Vagina (tissue), 2 donors: ENCODE measurements at regions of chr16 and their contacts with region 1.

Region 1: DNA sequence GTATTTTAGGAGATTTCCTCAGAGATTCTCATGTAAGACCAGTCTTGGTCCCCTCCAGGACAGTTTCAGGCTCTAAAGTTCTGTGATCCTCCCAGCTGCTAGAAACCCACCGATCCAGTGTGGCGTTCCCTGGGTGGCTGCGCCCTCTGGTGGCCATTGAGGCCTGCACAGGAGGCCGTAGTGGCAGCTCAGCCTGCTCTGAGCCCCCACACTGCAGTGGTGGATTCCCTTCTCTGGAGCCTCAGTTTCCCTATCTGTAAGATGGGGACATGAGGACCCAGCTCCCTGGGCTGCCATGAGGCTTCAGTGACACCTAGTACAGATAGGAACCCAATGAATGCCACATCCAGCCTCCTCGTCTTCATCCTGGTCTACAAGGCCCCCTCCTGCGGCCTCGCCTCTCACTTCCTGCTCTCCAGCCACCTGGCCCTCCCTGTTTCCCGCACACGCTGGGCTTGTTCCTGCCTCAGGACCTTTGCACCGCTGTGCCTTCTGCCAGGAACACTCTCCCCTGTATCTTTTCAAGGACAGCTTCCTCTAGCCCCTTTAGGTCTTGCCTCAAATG is 16.5 kb downstream of the CCDC102A start:
- DNase-seq: no peak
- H3K4me3 ChIP-seq: no peak overlapping the region
- H3K27ac ChIP-seq: no peak overlapping the region
- H3K4me1 ChIP-seq: peaks cover 5% of the 10 kb centered on the region
- H3K27me3 ChIP-seq: no peaks in the 10 kb centered on the region
- CTCF ChIP-seq: peak; percentile 91 to 98 (median 95)
- POLR2A ChIP-seq: no peak

Region 2: DNA sequence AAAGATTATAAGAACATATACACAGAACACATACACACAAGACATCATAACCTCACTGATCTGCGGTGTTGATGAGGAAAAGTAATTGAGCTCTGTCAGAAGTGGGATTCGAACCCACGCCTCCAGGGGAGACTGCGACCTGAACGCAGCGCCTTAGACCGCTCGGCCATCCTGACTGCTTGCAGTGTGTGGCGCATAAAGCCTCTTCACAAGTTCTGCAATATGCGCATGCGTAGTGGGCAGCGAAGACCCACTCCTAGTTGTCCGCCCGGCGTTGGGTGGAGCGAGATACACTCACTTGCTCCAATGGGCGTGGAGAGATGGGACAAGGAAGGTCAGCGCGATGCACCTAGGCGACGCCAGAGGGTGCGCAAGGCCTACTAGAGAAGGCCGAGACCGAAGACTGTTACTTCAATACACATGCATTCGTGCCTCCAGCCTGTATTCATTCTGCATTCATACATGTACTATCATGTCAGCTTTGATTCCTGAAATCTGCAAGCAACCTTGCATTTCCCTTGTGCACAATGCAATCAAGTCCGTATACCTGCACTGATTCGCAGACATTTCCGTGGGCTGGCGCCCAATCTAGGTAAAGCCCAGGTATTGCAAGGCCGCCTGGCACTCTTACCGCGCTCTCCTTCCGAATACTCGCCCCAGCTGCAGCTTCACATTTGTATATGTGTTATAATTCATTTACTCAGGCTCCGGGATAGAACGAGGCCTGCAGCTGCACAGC is 219.3 kb before region 1 on chr16:
- intact Hi-C with region 1: no loop called
- DNase-seq: peak; percentile 99 to 100
- H3K4me3 ChIP-seq: peak overlapping the region; percentile 46 to 56
- H3K27ac ChIP-seq: peak overlapping the region; percentile 98
- H3K4me1 ChIP-seq: peaks cover 16% of the 10 kb centered on the region
- H3K27me3 ChIP-seq: no peaks in the 10 kb centered on the region
- CTCF ChIP-seq: peak; percentile 91 to 99 (median 97)
- POLR2A ChIP-seq: no peak

Region 3: DNA sequence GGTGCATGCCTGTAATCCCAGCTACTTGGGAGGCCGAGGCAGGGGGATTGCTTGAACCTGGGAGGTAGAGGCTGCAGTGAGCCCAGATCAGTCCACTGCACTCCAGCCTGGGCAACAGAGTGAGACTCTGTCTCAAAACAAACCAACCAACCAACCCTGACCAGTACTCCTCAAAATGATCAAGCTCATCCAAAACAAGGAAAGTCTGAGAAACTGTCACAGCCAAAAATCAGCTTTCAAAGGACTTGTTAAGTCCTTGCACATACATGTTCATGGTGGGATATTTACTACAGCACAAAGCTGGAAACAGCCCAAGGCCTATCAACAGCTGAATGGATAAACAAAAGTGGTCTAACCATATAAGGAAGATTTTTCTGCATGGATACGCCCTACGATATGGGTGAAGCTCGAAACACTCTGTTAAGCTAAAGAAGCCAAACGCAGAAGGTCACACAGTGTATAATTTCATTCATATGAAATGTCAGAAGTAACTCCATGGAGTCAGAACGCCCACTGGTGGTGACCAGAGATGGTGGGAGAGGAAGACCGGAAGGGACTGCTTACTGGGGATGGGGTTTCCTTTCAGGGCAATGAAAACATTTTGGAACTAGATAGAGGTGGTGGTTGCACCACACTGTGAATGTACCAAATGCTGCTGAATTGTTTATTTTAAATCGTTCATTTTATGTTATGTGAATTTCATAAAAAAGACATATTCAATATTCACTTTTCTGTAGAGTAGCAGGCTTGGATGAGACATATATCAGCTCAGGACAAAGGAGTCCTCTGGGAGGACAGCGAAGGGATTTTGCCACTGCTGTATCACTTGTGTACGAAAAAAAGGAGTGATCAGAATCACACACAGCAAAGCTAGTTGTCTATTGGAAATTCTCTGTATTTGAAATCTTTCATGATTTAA is 97.6 kb before region 1 on chr16:
- intact Hi-C with region 1: loop called (anchors 10 kb)
- DNase-seq: no peak
- H3K4me3 ChIP-seq: no peak overlapping the region
- H3K27ac ChIP-seq: peak overlapping the region; percentile 20
- H3K4me1 ChIP-seq: peaks cover 27% of the 10 kb centered on the region
- H3K27me3 ChIP-seq: no peaks in the 10 kb centered on the region
- CTCF ChIP-seq: peak; percentile 3 to 63 (median 41)
- POLR2A ChIP-seq: no peak

Region 4: DNA sequence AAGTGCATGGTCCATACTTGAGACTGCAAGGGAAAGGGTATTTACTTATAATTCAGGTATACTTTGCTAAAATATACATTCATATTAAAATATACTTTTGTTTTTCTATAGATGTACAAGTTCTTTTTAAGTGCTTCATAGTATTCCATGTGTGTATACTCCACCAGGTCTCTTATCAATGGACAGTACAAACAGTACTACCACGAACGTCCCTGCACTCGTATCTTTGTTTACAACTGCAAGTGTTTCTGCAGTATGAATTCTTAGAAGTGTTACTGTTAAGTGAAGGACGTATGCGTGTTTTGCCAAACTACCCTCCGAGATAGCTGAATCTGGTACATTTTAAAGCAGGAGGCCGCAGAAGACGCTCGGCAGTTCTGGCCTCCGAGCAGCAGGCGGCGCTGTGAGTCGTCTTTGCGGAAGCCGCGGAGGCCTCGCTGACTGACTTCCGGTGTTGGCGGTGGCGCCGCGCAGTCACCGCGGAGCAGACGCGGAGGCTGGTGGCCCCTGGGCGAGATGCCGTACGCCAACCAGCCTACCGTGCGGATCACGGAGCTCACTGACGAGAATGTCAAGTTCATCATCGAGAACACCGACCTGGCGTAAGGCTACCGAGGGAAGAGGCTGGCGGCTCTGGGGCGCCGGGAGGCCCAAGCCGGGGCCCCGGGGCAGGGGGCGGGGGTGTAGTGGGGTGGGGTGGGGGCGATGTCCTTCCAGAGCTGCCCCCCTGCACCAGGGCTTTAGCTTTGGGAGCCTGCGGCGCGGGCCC is 57.5 kb before region 1 on chr16 and contains the start of gene POLR2C:
- intact Hi-C with region 1: loop called (anchors 5 kb)
- DNase-seq: no peak
- H3K4me3 ChIP-seq: peak within 1 kb of the TSS; percentile 93 to 99
- H3K27ac ChIP-seq: peak within 1 kb of the TSS; percentile 94
- H3K4me1 ChIP-seq: peaks cover 24% of the 10 kb centered on the region
- H3K27me3 ChIP-seq: no peaks in the 10 kb centered on the region
- CTCF ChIP-seq: peak; percentile 92 to 98 (median 96)
- POLR2A ChIP-seq: peak in 1 of 2 donors; percentile 78
- total RNA-seq, gene POLR2C: 127 TPM

Region 5: DNA sequence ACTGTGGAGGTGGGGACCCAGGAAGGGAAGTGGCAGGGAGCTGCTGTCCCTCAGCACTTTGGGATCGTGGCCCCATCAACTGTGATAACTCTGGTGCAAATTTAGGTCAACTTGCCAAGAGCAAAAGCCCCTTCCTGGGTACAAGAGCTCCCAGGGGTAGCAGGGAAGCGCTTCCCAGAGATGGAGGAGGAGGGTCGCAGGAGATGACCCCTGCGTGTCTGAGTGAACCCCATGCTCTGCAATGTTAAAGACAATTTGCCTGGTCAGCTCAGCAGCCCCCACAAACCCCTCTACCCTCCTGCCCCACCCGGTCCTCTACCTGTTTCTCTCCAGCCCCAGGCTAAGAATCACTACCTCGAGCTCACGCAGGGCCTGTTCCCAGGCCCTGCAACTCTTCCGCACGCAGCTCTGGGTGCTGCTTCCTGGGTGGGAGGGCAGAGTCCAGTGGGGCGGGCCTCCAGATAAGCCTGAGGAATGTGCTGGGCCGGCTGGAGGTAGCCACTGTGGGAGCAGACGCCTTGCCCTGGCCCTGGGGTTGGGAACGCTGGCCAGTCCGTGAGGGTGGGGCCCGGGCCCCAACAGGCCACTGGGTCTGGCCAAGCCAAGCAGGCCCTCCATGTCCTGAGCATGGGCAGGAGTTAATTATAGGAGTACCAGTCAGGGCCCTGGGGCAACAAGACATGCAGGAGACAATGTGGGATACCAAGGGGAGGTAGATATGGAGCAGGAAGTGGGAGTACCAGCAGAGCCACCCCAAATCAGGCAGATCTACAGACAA is 39.7 kb before region 1 on chr16:
- intact Hi-C with region 1: loop called (anchors 5 kb)
- DNase-seq: no peak
- H3K4me3 ChIP-seq: peak overlapping the region; percentile 49 to 50
- H3K27ac ChIP-seq: peak overlapping the region; percentile 74
- H3K4me1 ChIP-seq: peaks cover 77% of the 10 kb centered on the region
- H3K27me3 ChIP-seq: no peaks in the 10 kb centered on the region
- CTCF ChIP-seq: no peak
- POLR2A ChIP-seq: no peak

Region 6: GRCh38 chr16:58252716-58253115 is 732.8 kb after region 1 on chr16:
- intact Hi-C with region 1: no loop called
- DNase-seq: no peak
- H3K4me3 ChIP-seq: no peak overlapping the region
- H3K27ac ChIP-seq: no peak overlapping the region
- H3K4me1 ChIP-seq: peaks cover 13% of the 10 kb centered on the region
- H3K27me3 ChIP-seq: no peaks in the 10 kb centered on the region
- CTCF ChIP-seq: no peak
- POLR2A ChIP-seq: no peak